Left colon (tissue), 2 donors: ENCODE measurements at regions of chr17 and their contacts with region 1.

Region 1: GRCh38 chr17:42405963-42406495 is 17.0 kb downstream of the CAVIN1 start:
- DNase-seq: peak; percentile 68 to 88
- ATAC-seq: peak; percentile 49

Region 2: GRCh38 chr17:42312285-42313130 is 93.5 kb before region 1 on chr17:
- intact Hi-C with region 1: loop called in 1 of 2 experiments (anchors 10 kb)
- DNase-seq: peak; percentile 81 to 85
- ATAC-seq: peak; percentile 73

Region 3: DNA sequence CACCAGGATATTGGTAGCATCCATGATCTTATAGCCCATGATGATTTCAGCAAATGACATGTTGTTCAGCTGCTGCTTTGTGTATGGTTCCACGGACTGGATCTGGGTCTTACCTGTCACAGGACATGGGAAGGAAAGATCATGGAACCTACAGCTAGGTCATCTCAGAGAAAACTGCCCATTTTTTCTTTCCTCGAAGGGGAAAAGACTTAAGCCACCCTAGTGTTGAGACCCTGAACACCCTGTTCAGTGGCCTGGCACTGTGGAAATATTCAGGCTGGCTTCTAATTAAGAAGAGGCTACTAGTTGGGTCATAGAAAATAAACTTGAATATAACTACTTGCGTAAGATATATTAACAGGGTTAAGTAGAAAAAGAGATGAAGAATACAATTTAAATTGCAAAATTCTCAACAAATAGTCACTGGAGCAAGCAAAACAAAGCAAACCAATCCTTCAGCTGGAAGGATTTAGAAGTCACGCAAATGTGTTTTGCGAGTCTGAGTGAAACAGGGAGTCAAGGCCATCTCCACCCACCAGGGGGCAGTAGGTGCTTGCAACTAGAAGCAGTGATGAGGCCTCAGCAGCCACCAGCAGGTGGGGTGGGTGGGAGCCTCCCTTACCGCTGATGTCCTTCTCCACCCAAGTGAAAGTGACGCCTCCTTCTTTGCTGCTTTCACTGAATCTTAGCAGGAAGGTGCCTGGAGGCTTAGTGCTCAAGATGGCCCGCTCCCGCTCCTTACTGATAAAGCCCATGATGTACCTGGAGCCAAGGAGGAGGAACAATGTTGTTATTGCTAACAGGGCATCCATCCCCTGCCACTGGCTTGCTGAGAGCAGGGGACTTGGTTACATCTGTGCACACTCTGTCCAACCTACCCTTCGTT is 83.4 kb before region 1 on chr17:
- intact Hi-C with region 1: loop called (anchors 2 to 10 kb)
- DNase-seq: peak; percentile 90 to 98
- ATAC-seq: peak; percentile 94